ENCODE measurements at regions of chr2 and their contacts with region 1.

Region 1: GRCh38 chr2:219642465-219643080 is 15.1 kb downstream of the SLC4A3 start:
- DNase-seq: peak; percentile 79
- H3K4me3 ChIP-seq: no peak overlapping the region
- H3K27me3 ChIP-seq: no peaks in the 10 kb centered on the region
- CTCF ChIP-seq: peak; percentile 100

Region 2: DNA sequence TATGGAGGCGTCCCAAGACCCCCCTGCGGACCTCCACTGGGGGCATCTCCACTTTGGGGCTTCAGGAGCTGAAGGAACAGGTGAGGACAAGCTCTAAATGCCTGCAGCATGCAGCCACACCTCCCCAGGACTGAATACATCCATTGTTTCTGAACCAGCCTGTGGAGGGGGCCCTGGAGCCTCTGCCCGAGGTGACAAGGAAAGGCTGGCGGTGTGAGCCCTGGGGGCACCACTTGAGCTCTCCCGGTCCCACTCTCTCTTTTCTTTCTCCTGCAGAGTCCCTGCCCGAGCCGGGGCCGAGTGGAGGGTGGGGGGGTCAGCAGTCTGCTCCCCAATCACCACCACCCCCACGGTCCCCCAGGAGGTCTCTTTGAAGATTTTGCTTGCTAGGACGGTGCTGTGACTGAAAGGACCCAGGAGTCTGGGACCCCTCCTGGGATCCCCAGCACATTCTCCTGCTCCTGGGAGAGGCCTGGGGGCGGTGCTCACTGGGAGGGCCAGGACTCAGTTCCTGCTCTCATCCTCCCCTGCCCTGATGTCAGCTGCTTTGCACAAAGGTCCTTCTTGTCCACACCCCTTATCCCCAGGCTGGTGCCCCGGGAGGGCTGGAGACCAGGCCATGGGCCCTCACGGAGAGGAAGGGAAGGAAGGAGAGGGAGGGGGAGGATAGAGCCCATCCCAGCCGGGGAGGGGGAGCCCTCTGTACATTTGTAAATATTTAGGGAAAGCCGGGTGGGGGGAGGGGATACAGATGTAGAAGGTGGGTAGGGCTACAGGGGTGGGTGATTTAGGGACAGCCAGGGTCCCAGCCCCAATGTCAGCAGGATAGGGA is 104.7 kb before region 1 on chr2:
- CTCF ChIA-PET with region 1: interaction called, 20 read pairs
- POLR2A ChIA-PET with region 1: no interaction called
- DNase-seq: no peak
- H3K4me3 ChIP-seq: no peak overlapping the region
- H3K27me3 ChIP-seq: no peaks in the 10 kb centered on the region
- CTCF ChIP-seq: no peak; the same call in 1 of the 2 replicates

Region 3: GRCh38 chr2:219560037-219560892 is 82.3 kb before region 1 on chr2:
- CTCF ChIA-PET with region 1: interaction called, 11 read pairs
- POLR2A ChIA-PET with region 1: no interaction called
- DNase-seq: no peak
- H3K4me3 ChIP-seq: no peak overlapping the region
- H3K27me3 ChIP-seq: no peaks in the 10 kb centered on the region
- CTCF ChIP-seq: peak; percentile 80

Region 4: GRCh38 chr2:219597552-219598307 is 44.8 kb before region 1 on chr2 and contains the start of gene STK11IP:
- CTCF ChIA-PET with region 1: interaction called, 26 read pairs
- POLR2A ChIA-PET with region 1: interaction called, 3 read pairs
- DNase-seq: peak; percentile 81
- H3K4me3 ChIP-seq: peak within 1 kb of the TSS; percentile 83
- H3K27me3 ChIP-seq: no peaks in the 10 kb centered on the region
- CTCF ChIP-seq: no peak
- polyA plus RNA-seq, gene STK11IP: 11.3 and 21.0 TPM in 2 replicates

Region 5: DNA sequence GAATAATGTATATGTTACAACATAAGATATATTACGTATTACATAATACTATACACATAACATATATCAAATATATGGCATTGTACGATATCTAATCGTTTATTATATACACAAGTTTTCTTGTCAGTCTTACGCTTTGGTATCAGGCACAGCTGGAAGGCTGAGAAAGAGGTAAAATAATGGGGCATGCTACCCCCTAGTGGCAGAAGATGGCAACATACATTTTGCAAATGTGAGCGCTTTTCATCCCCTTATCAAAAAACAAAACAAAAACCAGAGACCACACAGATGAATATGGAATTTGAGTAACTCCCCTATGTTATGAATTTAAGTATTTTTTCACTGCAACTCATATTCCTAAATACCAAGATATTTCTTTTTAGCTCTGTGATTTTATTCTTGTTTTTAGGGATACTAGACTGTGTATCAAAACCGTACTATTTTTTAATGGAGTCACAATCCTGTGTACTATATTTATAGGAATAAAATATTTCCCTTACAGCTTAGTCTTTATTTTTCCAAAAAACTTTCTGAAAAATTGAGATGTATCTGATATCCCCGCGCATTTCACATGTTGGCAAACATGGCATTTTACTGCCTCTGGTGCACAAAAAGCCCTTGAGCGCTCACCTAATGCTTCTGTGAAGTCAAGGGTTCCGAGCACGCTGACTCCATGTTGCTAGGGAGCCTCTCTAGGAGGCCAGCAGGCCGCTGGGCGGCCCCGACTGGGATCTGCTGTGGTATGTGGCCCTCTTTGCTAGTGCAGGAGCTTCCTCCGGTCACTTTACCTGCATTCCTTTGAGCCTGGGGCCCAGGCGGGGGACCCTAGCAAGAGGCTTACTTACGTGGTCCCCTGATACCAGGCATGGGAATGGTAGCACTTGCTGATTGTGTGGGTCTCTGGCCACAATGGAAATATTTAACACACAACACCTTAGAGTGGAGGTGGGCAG is 47.4 kb after region 1 on chr2:
- CTCF ChIA-PET with region 1: interaction called, 88 read pairs
- POLR2A ChIA-PET with region 1: no interaction called
- DNase-seq: no peak
- H3K4me3 ChIP-seq: no peak overlapping the region
- H3K27me3 ChIP-seq: no peaks in the 10 kb centered on the region
- CTCF ChIP-seq: peak; percentile 74

Measured in BJ (cell line).